Activated CD4-positive, alpha-beta memory T cell treated with anti-CD3 and anti-CD28 coated beads for 36 hours (primary cell): ENCODE measurements at regions of chr9 and their contacts with region 1.

Region 1: GRCh38 chr9:114805670-114806525 is at the start of gene TNFSF15:
- DNase-seq: peak; percentile 67
- H3K4me3 Mint-ChIP-seq: peak within 1 kb of the TSS; percentile 30
- H3K27ac Mint-ChIP-seq: no peak within 1 kb of the TSS
- H3K4me1 Mint-ChIP-seq: peaks cover 24% of the 10 kb centered on the region
- H3K27me3 Mint-ChIP-seq: no peaks in the 10 kb centered on the region
- total RNA-seq, gene TNFSF15: 0.12 to 0.14 TPM

Region 2: GRCh38 chr9:114829574-114830440 is 23.9 kb after region 1 on chr9:
- CTCF ChIA-PET with region 1: no interaction called
- POLR2A ChIA-PET with region 1: no interaction called
- intact Hi-C with region 1: loop called (anchors 2 kb)
- DNase-seq: no peak
- H3K4me3 Mint-ChIP-seq: no peak overlapping the region
- H3K27ac Mint-ChIP-seq: no peak overlapping the region
- H3K4me1 Mint-ChIP-seq: peaks cover 13% of the 10 kb centered on the region
- H3K27me3 Mint-ChIP-seq: no peaks in the 10 kb centered on the region

Region 3: GRCh38 chr9:114852050-114852594 is 46.2 kb after region 1 on chr9:
- CTCF ChIA-PET with region 1: no interaction called
- POLR2A ChIA-PET with region 1: no interaction called
- intact Hi-C with region 1: loop called (anchors 5 kb)
- DNase-seq: no peak
- H3K4me3 Mint-ChIP-seq: no peak overlapping the region
- H3K27ac Mint-ChIP-seq: no peak overlapping the region
- H3K4me1 Mint-ChIP-seq: peaks cover 21% of the 10 kb centered on the region
- H3K27me3 Mint-ChIP-seq: no peaks in the 10 kb centered on the region